ENCODE measurements at regions of chr2 and their contacts with region 1.

Region 1: DNA sequence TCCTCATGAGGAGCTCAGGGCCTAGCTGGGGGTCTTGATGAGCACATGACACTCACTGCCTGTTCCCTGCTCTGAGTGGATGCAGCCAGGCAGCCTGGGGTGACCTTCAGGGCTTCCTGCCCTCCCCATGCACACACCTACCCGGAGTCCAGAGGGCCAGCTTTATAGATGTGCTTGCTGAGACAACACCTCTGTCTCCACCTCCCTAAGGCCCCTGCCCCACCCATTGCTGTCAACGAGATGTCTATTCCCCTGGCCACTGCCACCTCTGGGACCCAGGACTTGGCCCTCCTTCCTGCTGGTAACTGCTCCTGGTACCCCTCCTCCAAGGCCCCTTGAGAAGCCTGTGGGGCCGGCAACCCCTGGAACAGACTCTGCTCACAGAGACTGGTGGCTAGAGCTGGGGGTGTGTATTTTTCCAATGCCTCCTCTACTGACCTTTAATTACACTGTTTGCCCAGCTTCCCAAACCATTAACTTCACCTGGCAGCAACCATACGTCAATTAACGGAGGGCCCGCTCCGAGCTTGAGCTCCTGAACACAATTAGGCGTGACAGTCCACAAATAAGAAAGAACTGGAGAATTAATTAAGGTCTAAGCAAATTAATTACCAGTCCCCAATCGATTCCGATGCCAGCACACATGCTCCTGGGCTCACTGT is 66.3 kb downstream of the EMX1 start:
- DNase-seq: no peak
- H3K4me3 ChIP-seq: no peak overlapping the region
- H3K27ac ChIP-seq: no peak overlapping the region
- H3K27me3 ChIP-seq: no peaks in the 10 kb centered on the region
- CTCF ChIP-seq: no peak

Region 2: DNA sequence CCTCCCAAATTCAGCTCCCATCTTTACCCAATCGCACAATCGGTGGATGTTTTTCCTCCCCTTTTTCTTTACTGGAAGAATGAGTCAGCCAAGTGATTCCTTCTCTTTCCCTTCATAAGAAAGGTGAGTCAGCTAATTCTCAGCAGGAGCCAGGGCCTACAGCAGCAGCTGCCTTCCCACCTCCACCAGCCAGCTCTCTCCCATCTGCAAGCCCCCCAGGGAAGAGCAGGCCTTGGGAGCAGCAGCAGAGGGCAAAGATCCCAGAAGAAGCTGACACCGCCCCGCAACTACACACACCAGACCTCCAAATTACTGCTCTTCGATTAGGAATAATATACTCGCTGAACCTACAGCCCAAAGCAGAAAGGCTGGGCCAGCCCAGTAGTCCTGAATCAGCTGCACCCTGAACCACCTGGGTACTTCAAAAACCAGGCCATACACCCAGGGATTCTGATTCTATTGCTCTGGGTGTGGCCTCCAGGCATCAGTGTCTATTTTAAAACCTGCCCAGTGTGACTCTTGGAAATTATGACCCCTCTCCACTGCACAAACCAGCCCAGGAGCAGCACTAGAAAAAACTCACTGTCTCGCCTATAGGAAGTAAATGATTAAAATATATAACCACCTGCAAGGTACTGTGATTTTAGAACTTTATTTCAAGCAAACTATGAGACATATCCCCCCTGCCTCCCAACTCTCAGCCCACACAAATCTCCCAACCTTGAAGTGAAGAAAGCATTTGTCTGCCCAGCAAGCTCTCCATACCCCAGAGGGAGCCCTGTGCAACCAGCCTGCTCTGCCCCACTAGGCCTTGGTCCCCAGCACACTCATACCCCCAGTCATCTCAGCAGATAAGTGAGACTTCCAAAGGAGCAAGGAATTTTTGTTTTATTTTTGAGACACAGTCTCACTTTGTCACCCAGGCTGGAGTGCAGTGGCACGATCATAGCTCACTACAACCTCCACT is 80.6 kb after region 1 on chr2:
- CTCF ChIA-PET with region 1: interaction called, 10 read pairs
- POLR2A ChIA-PET with region 1: no interaction called
- DNase-seq: peak; percentile 43
- H3K4me3 ChIP-seq: no peak overlapping the region
- H3K27ac ChIP-seq: peak overlapping the region; percentile 94
- H3K27me3 ChIP-seq: no peaks in the 10 kb centered on the region
- CTCF ChIP-seq: no peak

Region 3: DNA sequence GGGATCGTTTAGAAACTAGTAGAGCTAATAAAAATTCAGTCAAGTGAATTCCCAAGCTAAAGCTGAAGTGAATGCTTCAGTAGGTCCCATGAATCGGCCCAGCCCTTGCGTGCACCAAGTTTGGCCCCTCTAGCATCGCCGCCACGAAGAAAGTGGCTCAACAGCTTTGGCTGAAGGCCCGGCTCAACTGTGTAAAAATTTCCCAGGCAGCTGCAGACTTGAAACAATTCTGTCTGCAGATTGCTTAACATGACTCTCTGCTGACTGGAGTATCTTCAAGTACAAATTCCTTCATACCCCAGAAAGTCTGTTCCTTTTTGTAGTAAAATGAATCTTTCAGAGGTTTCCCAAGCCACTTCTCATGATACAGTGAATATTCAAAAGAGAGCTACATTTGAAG is 434.7 kb after region 1 on chr2:
- CTCF ChIA-PET with region 1: no interaction called
- POLR2A ChIA-PET with region 1: no interaction called
- DNase-seq: peak; percentile 65
- H3K4me3 ChIP-seq: no peak overlapping the region
- H3K27ac ChIP-seq: no peak overlapping the region
- H3K27me3 ChIP-seq: no peaks in the 10 kb centered on the region
- CTCF ChIP-seq: no peak

Measured in AG04450 (cell line).